ENCODE measurements at regions of chr16 and their contacts with region 1.

Region 1: DNA sequence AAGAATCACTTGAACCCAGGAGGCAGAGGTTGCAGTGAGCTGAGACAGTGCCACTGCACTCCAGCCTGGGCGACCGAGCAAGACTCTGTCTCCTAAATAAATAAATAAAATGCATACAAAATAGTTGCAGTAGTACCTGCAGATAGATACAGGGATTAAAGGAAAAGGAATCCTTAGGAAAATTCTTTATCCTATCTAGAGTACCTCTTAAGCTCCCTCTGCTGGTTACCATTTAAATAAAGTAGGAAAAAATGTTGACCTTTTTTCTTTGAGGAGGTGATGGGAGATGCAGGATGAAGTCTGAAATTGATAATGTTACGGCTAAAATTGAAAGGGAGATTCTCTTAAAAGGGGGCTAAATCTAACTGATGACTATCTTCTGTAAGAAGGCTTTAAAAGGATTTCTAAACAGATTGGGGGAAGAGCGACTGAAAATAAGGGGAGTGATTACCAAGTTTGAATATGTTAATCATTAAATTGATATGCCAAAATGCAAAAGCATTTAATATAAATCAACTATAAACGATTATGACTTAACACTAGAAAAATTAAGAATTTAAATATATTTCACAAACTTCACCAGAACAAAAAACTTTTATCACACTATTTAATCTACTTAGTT is 29.4 kb downstream of the C16orf87 start:
- DNase-seq: no peak
- ATAC-seq: no peak
- H3K4me3 ChIP-seq: no peak overlapping the region
- H3K27ac ChIP-seq: no peak overlapping the region
- H3K4me1 ChIP-seq: no peaks in the 10 kb centered on the region
- H3K27me3 ChIP-seq: no peaks in the 10 kb centered on the region
- CTCF ChIP-seq: peak in 1 of 3 experiments; percentile 6; a peak in 1 of 6 replicates
- EP300 ChIP-seq: no peak
- POLR2A ChIP-seq: no peak
- RAD21 ChIP-seq: peak; percentile 39; the same call in 1 of the 2 replicates

Region 2: DNA sequence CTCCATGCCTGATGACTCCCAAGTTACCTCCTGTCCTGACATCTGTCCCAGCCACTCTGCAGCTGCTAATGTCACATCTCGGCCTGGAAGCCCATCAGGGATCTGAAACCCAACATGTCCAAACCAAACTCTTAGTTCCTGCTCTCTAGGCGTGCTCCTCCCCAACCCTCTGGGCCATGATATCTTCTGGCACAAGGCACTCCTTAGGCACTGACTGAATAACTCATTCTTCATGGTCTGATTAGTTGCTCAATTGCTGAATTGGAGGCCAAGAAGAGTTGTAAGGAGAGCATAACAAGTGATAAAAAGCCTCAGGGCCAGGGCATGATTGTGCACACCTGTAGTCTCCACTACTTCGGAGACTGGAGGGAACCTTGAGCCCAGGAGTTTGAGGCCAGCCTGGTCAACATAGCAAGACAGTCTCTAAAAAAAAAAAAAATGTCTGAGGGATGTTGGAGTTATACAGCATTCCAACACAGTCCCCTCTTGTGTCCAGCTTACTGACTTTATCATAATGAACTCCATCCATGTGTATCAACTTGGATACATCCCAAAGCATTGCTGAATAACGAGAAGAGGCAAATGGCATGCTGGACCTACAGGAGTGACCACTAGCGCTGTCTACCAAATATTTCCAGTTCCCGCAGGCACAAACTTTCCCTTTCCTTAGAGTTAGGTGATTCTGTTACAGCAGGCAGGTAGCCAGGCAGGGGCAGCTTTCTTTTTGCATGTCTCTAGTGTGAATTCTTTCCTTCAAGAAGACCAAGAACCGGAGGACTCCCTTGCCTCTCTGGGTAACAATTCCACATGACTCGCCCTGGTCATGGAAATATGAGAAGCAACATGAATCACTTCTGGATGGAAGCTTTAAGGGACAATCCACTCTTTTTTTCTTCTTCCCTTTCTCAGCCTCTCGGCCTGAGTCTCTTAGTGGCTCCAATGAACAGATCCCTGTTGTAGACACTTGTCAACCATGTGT is 162.3 kb before region 1 on chr16:
- CTCF ChIA-PET with region 1: no interaction called
- POLR2A ChIA-PET with region 1: no interaction called
- RAD21 ChIA-PET with region 1: no interaction called
- SMC1A ChIA-PET with region 1: no interaction called
- in situ Hi-C with region 1: no loop called
- intact Hi-C with region 1: no loop called
- DNase-seq: no peak
- ATAC-seq: no peak
- H3K4me3 ChIP-seq: no peak overlapping the region
- H3K27ac ChIP-seq: no peak overlapping the region
- H3K4me1 ChIP-seq: no peaks in the 10 kb centered on the region
- H3K27me3 ChIP-seq: no peaks in the 10 kb centered on the region
- CTCF ChIP-seq: no peak
- EP300 ChIP-seq: no peak
- POLR2A ChIP-seq: no peak
- RAD21 ChIP-seq: no peak

Region 3: DNA sequence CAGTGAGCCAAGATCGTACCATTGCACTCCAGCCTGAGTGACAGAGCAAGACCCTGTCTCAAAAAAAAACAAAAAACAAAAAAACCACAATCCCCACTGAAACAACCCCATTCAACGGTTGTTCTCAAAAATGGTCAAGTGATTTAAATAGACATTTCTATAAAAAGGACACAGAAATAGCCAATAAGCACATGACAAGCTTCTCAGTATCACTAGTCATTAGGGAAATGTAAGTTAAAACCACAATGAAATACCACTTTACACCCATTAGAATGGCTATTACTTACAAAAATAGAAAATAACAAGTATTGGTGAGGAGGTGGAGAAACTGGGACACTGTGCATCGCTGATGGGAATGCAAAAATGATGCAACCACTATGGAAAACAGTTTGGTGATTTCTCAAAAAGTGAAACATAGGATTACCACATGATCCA is 26.8 kb before region 1 on chr16:
- CTCF ChIA-PET with region 1: interaction called, 13 read pairs
- POLR2A ChIA-PET with region 1: interaction called, 3 read pairs
- RAD21 ChIA-PET with region 1: interaction called, 3 read pairs
- SMC1A ChIA-PET with region 1: interaction called, 5 read pairs
- in situ Hi-C with region 1: no loop called
- intact Hi-C with region 1: no loop called
- DNase-seq: peak; percentile 60
- ATAC-seq: peak; percentile 86
- H3K4me3 ChIP-seq: no peak overlapping the region
- H3K27ac ChIP-seq: peak overlapping the region; percentile 53; the same call in 1 of the 2 replicates
- H3K4me1 ChIP-seq: peaks cover 17% of the 10 kb centered on the region
- H3K27me3 ChIP-seq: no peaks in the 10 kb centered on the region
- CTCF ChIP-seq: no peak
- EP300 ChIP-seq: peak in 1 of 2 experiments; percentile 81; a peak in 2 of 4 replicates
- POLR2A ChIP-seq: no peak
- RAD21 ChIP-seq: no peak

Region 4: DNA sequence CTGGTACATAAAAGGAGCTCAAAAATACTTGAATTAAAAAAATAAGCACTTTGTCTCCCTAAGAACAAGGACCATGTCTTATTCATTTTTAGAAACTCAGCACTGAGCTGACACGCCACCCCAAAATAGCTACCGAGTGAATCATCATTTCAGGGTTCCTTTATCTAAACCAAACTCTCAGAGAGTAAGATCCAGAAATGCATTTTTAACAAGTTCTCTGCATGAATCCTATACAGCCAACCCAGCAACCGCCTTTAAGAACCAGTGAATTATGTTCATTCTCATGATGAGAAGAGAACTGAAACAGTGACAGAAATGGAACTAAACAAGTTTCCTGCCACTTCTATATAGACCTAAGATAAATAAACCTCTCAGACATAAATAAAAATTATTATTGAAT is 20.7 kb after region 1 on chr16:
- CTCF ChIA-PET with region 1: interaction called, 28 read pairs
- POLR2A ChIA-PET with region 1: no interaction called
- RAD21 ChIA-PET with region 1: interaction called, 6 read pairs
- SMC1A ChIA-PET with region 1: interaction called, 25 read pairs
- in situ Hi-C with region 1: no loop called
- intact Hi-C with region 1: no loop called
- DNase-seq: peak; percentile 57
- ATAC-seq: peak; percentile 79
- H3K4me3 ChIP-seq: peak overlapping the region; percentile 54; the same call in 1 of the 2 replicates
- H3K27ac ChIP-seq: peak overlapping the region; percentile 88
- H3K4me1 ChIP-seq: peaks cover 26% of the 10 kb centered on the region
- H3K27me3 ChIP-seq: no peaks in the 10 kb centered on the region
- CTCF ChIP-seq: no peak
- EP300 ChIP-seq: peak in 1 of 2 experiments; percentile 69; a peak in 2 of 4 replicates
- POLR2A ChIP-seq: no peak
- RAD21 ChIP-seq: 0 out of 2 replicates have a peak, but pooled peaks have one; percentile 3

Region 5: GRCh38 chr16:46859719-46860152 is 58.2 kb after region 1 on chr16:
- CTCF ChIA-PET with region 1: no interaction called
- POLR2A ChIA-PET with region 1: no interaction called
- RAD21 ChIA-PET with region 1: no interaction called
- SMC1A ChIA-PET with region 1: no interaction called
- in situ Hi-C with region 1: no loop called
- intact Hi-C with region 1: no loop called
- DNase-seq: no peak
- ATAC-seq: peak; percentile 12; the same call in 1 of the 3 replicates
- H3K4me3 ChIP-seq: no peak overlapping the region
- H3K27ac ChIP-seq: no peak overlapping the region
- H3K4me1 ChIP-seq: peaks cover 13% of the 10 kb centered on the region
- H3K27me3 ChIP-seq: no peaks in the 10 kb centered on the region
- CTCF ChIP-seq: no peak
- EP300 ChIP-seq: no peak
- POLR2A ChIP-seq: no peak
- RAD21 ChIP-seq: no peak

Region 6: DNA sequence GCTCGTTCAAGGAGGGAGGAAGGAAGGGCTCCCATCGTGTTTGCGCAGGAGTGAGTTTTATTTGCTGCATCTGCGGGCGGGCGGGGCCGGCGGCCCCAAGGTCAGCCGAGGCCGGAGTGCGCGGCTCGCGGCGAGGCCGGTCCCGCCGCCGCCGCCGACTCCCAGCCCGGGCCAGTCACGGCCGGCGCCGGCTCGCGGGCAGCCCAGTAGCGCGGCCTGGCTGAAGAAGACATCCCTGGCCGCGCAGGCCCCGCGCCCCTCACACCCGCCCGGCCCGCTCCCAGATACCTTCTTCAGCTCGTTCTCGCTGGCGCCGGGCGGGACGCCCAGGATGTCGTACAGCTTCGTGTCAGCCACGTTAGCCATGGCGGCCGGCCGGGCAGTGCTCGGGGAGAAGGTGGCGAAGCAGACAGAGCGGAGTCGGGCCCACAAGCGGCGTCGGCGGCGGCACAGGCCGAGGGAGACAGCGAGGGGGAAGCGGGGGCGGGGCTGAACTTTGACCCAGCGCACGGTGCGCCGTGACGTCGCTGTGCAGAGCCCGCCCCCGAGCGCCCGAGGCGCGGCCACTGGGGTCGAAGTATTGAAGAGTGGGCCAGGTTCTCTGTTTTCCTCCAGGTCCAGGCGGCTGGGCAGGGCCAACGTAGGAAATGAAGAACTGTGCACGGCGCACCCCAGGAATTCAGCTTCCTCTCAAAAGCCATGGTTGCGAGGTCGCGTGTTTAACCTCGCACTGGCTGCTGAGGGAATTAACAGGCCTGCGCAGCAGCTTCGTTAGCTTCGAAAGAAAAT is 171.9 kb after region 1 on chr16 and contains the start of gene DNAJA2:
- CTCF ChIA-PET with region 1: no interaction called
- POLR2A ChIA-PET with region 1: no interaction called
- RAD21 ChIA-PET with region 1: no interaction called
- SMC1A ChIA-PET with region 1: no interaction called
- in situ Hi-C with region 1: no loop called
- intact Hi-C with region 1: no loop called
- DNase-seq: peak; percentile 54
- ATAC-seq: peak; percentile 90
- H3K4me3 ChIP-seq: peak within 1 kb of the TSS; percentile 88
- H3K27ac ChIP-seq: peak within 1 kb of the TSS; percentile 98
- H3K4me1 ChIP-seq: peaks cover 23% of the 10 kb centered on the region
- H3K27me3 ChIP-seq: no peaks in the 10 kb centered on the region
- CTCF ChIP-seq: no peak
- EP300 ChIP-seq: no peak
- POLR2A ChIP-seq: peak; percentile 91
- RAD21 ChIP-seq: no peak
- polyA plus RNA-seq, gene DNAJA2: 40.4 to 43.5 TPM

Measured in GM12878 (cell line).